ENCODE measurements at regions of chr12 and their contacts with region 1.

Region 1: GRCh38 chr12:53701518-53702260 is 25.6 kb downstream of the CALCOCO1 start:
- H3K4me3 ChIP-seq: no peak overlapping the region
- H3K27ac ChIP-seq: no peak overlapping the region
- H3K4me1 ChIP-seq: peaks cover 1% of the 10 kb centered on the region; the same call in 1 of the 2 replicates
- CTCF ChIP-seq: peak; percentile 97

Region 2: DNA sequence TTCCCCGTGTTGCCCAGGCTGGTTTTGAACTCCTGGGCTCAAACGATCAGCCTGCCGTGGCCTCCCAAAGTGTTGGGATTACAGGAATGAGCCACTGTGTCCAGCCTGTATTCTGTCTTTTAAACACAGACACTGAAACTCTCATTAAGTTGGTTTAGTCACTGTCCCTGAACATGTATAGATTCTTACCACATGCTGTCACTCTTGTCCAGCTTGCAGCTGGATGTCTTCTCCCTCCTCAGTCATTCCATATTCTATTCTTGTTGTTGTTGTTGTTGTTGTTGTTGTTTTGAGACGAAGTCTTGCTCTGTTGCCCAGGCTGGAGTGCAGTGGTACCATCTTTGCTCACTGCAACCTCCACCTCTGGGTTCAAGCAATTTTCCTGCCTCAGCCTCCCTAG is 13.6 kb before region 1 on chr12:
- CTCF ChIA-PET with region 1: interaction called, 17 read pairs
- POLR2A ChIA-PET with region 1: no interaction called
- H3K4me3 ChIP-seq: no peak overlapping the region
- H3K27ac ChIP-seq: no peak overlapping the region
- H3K4me1 ChIP-seq: no peaks in the 10 kb centered on the region
- CTCF ChIP-seq: peak; percentile 53

Region 3: DNA sequence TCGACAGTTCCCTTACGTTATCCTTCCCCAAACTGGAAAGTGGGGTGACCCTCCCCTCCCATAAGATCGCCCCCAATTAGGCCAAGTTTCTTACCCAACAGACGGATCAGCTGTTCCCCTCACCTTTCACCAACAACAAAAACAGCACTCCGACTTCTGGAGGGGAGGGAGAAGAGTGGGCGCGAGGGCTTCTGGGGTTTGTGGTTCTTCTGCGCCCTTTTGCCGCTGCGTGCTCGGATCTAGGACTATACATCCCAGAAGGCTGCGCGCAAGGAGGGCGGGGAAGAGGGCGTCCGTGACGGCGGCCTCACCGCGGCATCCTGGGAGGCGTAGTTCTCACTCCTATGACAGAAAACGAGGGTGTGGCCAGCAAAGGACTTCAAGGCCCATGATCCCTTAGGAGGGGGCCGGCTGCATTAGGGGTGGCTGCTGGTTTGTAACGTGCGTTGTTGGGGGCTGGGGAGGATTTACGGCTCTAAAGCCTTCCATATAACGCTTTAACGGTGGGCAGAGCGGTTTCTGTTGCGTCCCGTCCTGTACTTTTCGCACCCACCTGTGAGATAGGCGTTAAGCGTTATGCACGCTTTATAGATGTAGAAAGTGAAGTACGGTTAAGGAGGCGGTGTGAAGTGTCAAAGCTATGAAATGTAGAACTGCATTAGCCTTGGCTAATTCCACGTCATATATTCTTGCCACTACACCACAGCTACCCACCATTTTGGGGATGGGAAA is 25.8 kb after region 1 on chr12 and contains the start of gene CALCOCO1:
- CTCF ChIA-PET with region 1: interaction called, 42 read pairs
- POLR2A ChIA-PET with region 1: no interaction called
- H3K4me3 ChIP-seq: peak within 1 kb of the TSS; percentile 65
- H3K27ac ChIP-seq: peak within 1 kb of the TSS; percentile 4; the same call in 1 of the 2 replicates
- H3K4me1 ChIP-seq: peaks cover 2% of the 10 kb centered on the region; the same call in 1 of the 2 replicates
- CTCF ChIP-seq: no peak

Region 4: DNA sequence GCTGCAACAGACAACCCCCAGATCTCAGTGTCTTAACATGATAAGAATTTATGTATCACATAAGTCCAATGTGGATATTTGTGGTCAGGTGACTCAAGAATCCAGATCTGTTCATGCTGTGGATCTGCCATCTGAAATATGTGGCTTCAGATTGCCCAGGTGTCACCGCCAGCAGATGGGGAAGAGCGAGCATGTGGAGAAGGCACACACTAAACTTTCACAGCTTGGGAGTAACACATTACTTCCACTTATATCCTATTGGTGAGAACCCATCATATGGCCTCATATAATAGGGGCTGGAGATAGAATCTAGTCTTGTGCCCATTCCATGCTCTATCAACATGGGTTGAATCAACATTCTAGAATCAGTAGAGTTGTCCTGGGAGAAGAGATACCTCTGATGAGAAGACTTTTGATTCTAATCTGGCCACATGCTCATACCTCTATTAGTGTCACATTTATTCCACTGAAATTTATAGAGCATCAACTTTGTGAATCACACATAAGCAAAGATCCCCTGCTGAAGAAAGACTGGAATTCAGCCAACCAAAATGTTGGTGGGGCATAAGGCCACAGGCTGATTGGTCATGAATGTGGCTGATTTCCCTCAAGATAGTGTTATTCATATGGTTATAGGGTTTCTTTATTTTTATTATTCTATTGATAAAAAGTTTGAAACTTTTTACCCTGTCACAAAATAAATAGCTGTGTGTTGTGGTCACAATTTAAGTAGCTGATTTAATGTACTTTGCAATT is 31.5 kb after region 1 on chr12:
- CTCF ChIA-PET with region 1: interaction called, 915 read pairs
- POLR2A ChIA-PET with region 1: interaction called, 3 read pairs
- H3K4me3 ChIP-seq: no peak overlapping the region
- H3K27ac ChIP-seq: peak overlapping the region; percentile 65
- H3K4me1 ChIP-seq: peaks cover 5% of the 10 kb centered on the region; the same call in 1 of the 2 replicates
- CTCF ChIP-seq: no peak